Right cardiac atrium (tissue), 5 donors: ENCODE measurements at regions of chr17 and their contacts with region 1.

Region 1: GRCh38 chr17:39450847-39451581 is at the start of gene MED1:
- DNase-seq: peak; percentile 94 to 97 (median 97)
- ATAC-seq: peak; percentile 98 to 99
- H3K4me3 ChIP-seq: peak within 1 kb of the TSS; percentile 99
- H3K27ac ChIP-seq: peak within 1 kb of the TSS; percentile 97
- H3K4me1 ChIP-seq: peaks cover 2% of the 10 kb centered on the region
- H3K27me3 ChIP-seq: no peaks in the 10 kb centered on the region
- total RNA-seq, gene MED1: 21.4 to 25.8 (median 23.5) TPM

Region 2: GRCh38 chr17:39401412-39402243 is 49.4 kb before region 1 on chr17 and contains the start of gene FBXL20:
- intact Hi-C with region 1: loop called in 1 of 4 experiments (anchors 2 kb)
- DNase-seq: peak; percentile 94 to 98 (median 98)
- ATAC-seq: peak; percentile 94 to 95
- H3K4me3 ChIP-seq: peak within 1 kb of the TSS; percentile 90
- H3K27ac ChIP-seq: peak within 1 kb of the TSS; percentile 79
- H3K4me1 ChIP-seq: no peaks in the 10 kb centered on the region
- H3K27me3 ChIP-seq: no peaks in the 10 kb centered on the region
- total RNA-seq, gene FBXL20: 8.6 to 12.4 (median 10.7) TPM

Region 3: DNA sequence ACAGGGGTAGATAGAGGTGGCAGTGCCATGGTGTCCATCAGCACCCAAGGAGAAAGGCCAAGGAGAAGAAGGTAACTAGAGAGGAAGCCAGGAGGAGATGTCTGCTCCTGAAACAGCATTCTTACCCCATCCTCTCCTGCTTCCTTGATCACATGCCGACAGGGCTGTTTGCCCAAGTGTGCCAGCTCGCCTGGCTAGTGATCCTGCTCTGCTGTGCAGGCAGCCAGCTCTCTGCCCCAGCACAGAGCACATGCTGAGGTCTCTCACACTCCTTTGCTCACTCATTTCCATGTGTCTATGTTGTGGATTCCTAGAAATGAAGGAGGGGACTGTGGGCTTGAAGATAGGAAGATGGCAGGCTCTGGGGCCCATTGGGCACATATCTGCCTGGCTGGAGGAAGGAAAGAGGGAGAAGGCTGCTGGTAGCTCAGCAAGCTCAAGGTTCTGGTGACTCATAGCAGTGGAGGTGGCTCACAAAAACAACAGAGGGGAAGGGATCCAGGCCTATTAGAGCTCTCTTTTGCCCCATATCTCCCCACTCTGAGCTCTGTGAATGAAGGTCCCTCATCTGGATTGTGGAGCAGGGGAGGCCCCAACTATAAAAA is 102.4 kb after region 1 on chr17:
- intact Hi-C with region 1: no loop called
- DNase-seq: no peak
- ATAC-seq: no peak
- H3K4me3 ChIP-seq: no peak overlapping the region
- H3K27ac ChIP-seq: no peak overlapping the region
- H3K4me1 ChIP-seq: peaks cover 2% of the 10 kb centered on the region
- H3K27me3 ChIP-seq: no peaks in the 10 kb centered on the region